B cell (primary cell): ENCODE measurements at regions of chr9 and their contacts with region 1.

Region 1: DNA sequence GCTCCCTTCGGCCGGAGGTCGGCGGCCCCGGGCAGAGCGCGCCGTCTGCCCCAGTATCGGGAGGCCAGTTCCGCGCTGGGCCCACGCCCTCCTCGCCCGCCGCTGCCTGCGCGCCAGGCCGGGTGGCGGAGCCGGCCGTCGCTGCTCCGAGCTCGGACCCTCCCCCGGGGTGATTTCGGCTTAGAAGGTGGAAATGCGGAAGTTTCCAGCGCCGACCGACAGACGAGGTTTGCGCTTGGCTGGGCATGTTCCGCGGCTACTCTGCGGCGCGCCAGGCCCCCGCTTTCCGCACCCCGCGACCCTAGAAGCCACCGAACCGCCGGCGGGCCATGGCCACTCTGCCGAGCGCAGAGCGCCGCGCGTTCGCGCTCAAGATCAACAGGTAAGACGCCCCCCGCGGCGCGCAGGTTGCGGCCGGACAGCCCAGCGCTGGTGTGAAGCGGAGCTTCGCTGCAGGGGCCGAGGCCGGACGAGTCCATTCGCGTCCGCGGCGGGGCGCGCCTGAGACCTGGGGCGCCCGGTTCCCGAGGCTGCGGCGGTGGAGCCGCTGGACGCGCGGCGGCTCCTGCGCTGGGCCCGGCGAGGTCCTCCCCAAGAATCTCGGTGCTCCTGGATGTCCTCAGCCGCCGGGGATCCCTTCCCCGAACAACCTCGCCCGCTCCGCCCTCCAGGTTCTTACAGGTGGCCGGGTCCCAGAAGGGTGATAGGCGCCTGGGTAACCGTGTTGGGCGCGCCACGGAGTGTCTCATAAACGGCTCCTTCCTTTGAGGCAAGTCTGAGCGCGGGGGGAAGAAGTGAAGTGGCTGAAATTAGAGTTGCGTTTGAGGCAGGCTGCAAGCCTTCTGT is at the start of gene DOCK8:
- DNase-seq: peak; percentile 91
- ATAC-seq: peak; percentile 81
- H3K4me3 ChIP-seq: peak within 1 kb of the TSS; percentile 67 to 93 (median 79)
- H3K4me3 Mint-ChIP-seq: peak within 1 kb of the TSS; percentile 94
- H3K27ac ChIP-seq: peak within 1 kb of the TSS; percentile 61 to 90
- H3K27ac Mint-ChIP-seq: peak within 1 kb of the TSS; percentile 97
- H3K4me1 ChIP-seq: peaks cover 27 to 37% of the 10 kb centered on the region in 2 donors
- H3K4me1 Mint-ChIP-seq: peaks cover 41% of the 10 kb centered on the region
- H3K27me3 ChIP-seq: no peaks in the 10 kb centered on the region
- H3K27me3 Mint-ChIP-seq: no peaks in the 10 kb centered on the region
- CTCF ChIP-seq: peak; percentile 53
- total RNA-seq, gene DOCK8: 288 and 297 TPM in 2 replicates

Region 2: GRCh38 chr9:281741-282645 is 67.1 kb after region 1 on chr9:
- CTCF ChIA-PET with region 1: interaction called, 12 read pairs
- POLR2A ChIA-PET with region 1: interaction called, 5 read pairs
- intact Hi-C with region 1: no loop called
- DNase-seq: peak; percentile 24
- ATAC-seq: peak; percentile 36
- H3K4me3 ChIP-seq: peak overlapping the region in 2 of 5 experiments; percentile 0 to 1
- H3K4me3 Mint-ChIP-seq: peak overlapping the region; percentile 86
- H3K27ac ChIP-seq: peak overlapping the region; percentile 56 to 74
- H3K27ac Mint-ChIP-seq: peak overlapping the region; percentile 91
- H3K4me1 ChIP-seq: peaks cover 52 to 65% of the 10 kb centered on the region in 2 donors
- H3K4me1 Mint-ChIP-seq: peaks cover 35% of the 10 kb centered on the region
- H3K27me3 ChIP-seq: no peaks in the 10 kb centered on the region
- H3K27me3 Mint-ChIP-seq: no peaks in the 10 kb centered on the region
- CTCF ChIP-seq: no peak